ENCODE measurements at regions of chrX and their contacts with region 1.

Region 1: DNA sequence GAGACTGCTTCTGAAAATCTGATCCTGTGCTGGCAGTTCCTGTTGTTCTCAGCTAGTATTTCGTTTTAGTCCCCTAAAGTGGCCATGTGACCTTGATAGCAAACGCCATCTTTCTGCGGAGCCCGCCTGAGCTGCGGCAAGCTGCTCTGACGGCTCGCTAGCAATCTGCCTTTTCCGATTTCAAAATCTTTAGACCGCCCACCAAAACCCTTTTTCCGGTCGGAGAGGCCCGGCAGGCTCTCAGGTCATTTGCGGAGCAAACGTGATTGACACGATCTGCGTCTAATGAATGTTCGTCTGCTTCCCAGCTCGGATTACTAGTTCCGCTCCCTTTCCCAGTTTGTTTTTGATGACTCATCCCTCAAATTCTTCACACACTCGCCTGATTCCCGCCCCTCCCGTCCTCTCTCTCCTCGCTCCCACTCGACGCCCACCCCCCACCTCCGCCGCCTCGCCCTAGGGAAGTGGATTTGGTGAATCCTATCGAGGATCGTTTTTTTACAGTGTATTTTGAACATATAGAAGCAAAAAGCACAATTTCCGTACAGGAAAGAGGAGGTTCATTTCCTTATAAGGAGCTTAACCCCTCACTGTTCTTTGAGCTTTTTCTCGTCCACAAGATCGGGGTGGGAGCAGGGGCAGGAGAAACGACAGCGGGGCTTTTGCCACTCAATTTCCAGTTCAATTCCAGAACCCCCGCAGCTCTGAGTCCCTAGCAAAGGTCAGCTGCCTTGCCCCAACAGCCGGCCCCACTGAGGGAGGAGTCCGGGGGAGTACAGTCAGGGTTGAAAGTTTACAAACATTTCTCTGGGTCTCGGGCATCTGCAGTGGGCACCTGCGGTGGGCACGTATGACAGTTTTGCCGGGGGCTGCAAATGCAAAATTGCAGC is 37.5 kb downstream of the NLGN3 start:
- DNase-seq: peak; percentile 42 to 86 (median 80)
- ATAC-seq: peak; percentile 95
- H3K4me3 ChIP-seq: peak overlapping the region; percentile 85
- H3K4me3 Mint-ChIP-seq: peak overlapping the region; percentile 83 to 98 (median 96)
- H3K27ac ChIP-seq: peak overlapping the region; percentile 94
- H3K27ac Mint-ChIP-seq: peak overlapping the region; percentile 95 to 100 (median 98)
- H3K4me1 ChIP-seq: peaks cover 0 to 10% of the 10 kb centered on the region in 2 donors
- H3K4me1 Mint-ChIP-seq: peaks cover 0 to 28% (median 21%) of the 10 kb centered on the region in 7 donors
- H3K27me3 ChIP-seq: no peaks in the 10 kb centered on the region
- H3K27me3 Mint-ChIP-seq: no peaks in the 10 kb centered on the region

Region 2: GRCh38 chrX:70133303-70134115 is 1048.6 kb before region 1 on chrX and contains the start of gene IGBP1:
- CTCF ChIA-PET with region 1: no interaction called
- POLR2A ChIA-PET with region 1: no interaction called
- intact Hi-C with region 1: loop called in 1 of 2 experiments (anchors 5 kb)
- DNase-seq: peak; percentile 40 to 90 (median 82)
- ATAC-seq: peak; percentile 90
- H3K4me3 ChIP-seq: peak within 1 kb of the TSS; percentile 94
- H3K4me3 Mint-ChIP-seq: peak within 1 kb of the TSS; percentile 95 to 99 (median 99)
- H3K27ac ChIP-seq: peak within 1 kb of the TSS; percentile 82
- H3K27ac Mint-ChIP-seq: peak within 1 kb of the TSS; percentile 91 to 99 (median 97)
- H3K4me1 ChIP-seq: peaks cover 16 to 18% of the 10 kb centered on the region in 2 donors
- H3K4me1 Mint-ChIP-seq: peaks cover 14 to 47% (median 29%) of the 10 kb centered on the region in 7 donors
- H3K27me3 ChIP-seq: no peaks in the 10 kb centered on the region
- H3K27me3 Mint-ChIP-seq: no peaks in the 10 kb centered on the region
- total RNA-seq, gene IGBP1: 46.7 to 70.1 (median 58.9) TPM

Region 3: GRCh38 chrX:70970482-70970995 is 211.6 kb before region 1 on chrX:
- CTCF ChIA-PET with region 1: interaction called, 9 read pairs
- POLR2A ChIA-PET with region 1: no interaction called
- intact Hi-C with region 1: loop called (anchors 1 to 2 kb)
- DNase-seq: peak in 5 of 9 donors; percentile 1 to 26 (median 6)
- ATAC-seq: no peak
- H3K4me3 ChIP-seq: no peak overlapping the region
- H3K4me3 Mint-ChIP-seq: peak overlapping the region in 7 of 10 donors; percentile 2 to 57 (median 25)
- H3K27ac ChIP-seq: no peak overlapping the region
- H3K27ac Mint-ChIP-seq: no peak overlapping the region
- H3K4me1 ChIP-seq: no peaks in the 10 kb centered on the region
- H3K4me1 Mint-ChIP-seq: peaks cover 0 to 8% (median 3%) of the 10 kb centered on the region in 7 donors
- H3K27me3 ChIP-seq: no peaks in the 10 kb centered on the region
- H3K27me3 Mint-ChIP-seq: peaks cover 0 to 3% (median 0%) of the 10 kb centered on the region in 5 donors

Region 4: GRCh38 chrX:71032516-71032915 is 149.6 kb before region 1 on chrX:
- CTCF ChIA-PET with region 1: no interaction called
- POLR2A ChIA-PET with region 1: no interaction called
- intact Hi-C with region 1: no loop called
- DNase-seq: no peak
- ATAC-seq: no peak
- H3K4me3 ChIP-seq: no peak overlapping the region
- H3K4me3 Mint-ChIP-seq: no peak overlapping the region
- H3K27ac ChIP-seq: no peak overlapping the region
- H3K27ac Mint-ChIP-seq: no peak overlapping the region
- H3K4me1 ChIP-seq: no peaks in the 10 kb centered on the region
- H3K4me1 Mint-ChIP-seq: peaks cover 0 to 3% (median 0%) of the 10 kb centered on the region in 7 donors
- H3K27me3 ChIP-seq: no peaks in the 10 kb centered on the region
- H3K27me3 Mint-ChIP-seq: no peaks in the 10 kb centered on the region

Region 5: DNA sequence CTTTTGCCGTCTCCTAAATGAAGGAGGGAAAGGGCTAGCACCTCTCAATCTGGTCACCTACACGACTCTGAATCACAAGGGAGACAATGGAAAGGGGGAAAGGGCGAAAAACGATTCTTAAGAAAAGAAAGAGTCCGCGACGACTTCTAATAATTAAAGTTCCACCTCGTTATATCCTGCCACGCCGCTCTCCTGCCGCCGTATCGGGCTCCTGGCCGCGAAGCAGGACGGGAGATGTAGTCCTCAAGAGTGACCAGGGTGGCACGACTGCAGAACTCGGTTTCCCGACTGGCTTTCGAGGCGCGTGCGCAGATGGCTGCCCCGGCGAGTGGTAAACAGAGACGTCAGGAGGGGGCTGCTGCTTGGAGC is 86.6 kb before region 1 on chrX and contains the start of gene FOXO4:
- CTCF ChIA-PET with region 1: interaction called, 18 read pairs
- POLR2A ChIA-PET with region 1: interaction called, 9 read pairs
- intact Hi-C with region 1: loop called (anchors 1 to 2 kb)
- DNase-seq: peak; percentile 69 to 91 (median 82)
- ATAC-seq: peak; percentile 92
- H3K4me3 ChIP-seq: peak within 1 kb of the TSS; percentile 70
- H3K4me3 Mint-ChIP-seq: peak within 1 kb of the TSS; percentile 90 to 100 (median 96)
- H3K27ac ChIP-seq: peak within 1 kb of the TSS; percentile 85
- H3K27ac Mint-ChIP-seq: peak within 1 kb of the TSS; percentile 91 to 97 (median 95)
- H3K4me1 ChIP-seq: peaks cover 20 to 21% of the 10 kb centered on the region in 2 donors
- H3K4me1 Mint-ChIP-seq: peaks cover 11 to 40% (median 32%) of the 10 kb centered on the region in 7 donors
- H3K27me3 ChIP-seq: no peaks in the 10 kb centered on the region
- H3K27me3 Mint-ChIP-seq: peaks cover 0 to 6% (median 0%) of the 10 kb centered on the region in 5 donors
- total RNA-seq, gene FOXO4: 11.9 to 40.6 (median 30.0) TPM

Region 6: DNA sequence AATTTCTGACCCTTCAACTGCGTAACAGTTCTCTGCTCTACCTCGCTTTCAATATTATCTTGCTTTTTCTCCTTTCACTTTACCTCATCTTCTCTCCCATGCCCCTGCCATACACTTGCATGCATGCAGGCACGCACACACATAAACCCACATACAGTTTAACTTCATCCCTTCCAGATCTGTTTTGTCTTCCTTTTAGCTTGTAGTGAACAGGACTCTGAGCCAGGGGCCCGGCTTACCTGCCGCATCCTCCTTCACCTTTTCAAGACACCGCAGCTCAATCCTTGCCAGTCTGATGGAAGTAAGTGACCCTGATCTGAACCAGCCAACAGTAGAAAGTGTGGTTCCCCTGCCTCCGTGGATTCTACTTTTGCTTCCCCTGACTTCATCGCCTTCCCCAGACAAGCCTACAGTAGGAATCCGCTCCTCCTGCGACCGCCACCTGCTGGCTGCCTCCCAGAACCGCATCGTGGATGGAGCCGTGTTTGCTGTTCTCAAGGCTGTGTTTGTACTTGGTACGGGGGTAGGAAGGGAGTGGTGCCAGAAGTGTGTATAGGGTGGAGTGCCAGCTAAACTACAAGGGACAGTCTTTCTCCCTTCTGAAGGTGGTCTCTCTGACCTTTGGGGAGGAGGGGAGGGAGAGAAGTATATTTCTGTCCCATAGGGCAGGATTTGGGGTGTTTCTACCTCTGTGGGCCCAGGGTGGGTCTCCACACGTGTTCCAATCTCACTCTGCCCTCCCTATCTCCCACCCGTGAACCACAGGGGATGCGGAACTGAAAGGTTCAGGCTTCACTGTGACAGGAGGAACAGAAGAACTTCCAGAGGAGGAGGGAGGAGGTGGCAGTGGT is 53.0 kb before region 1 on chrX:
- CTCF ChIA-PET with region 1: no interaction called
- POLR2A ChIA-PET with region 1: interaction called, 3 read pairs
- intact Hi-C with region 1: loop called in 1 of 2 experiments (anchors 1 kb)
- DNase-seq: peak; percentile 52 to 81 (median 71)
- ATAC-seq: peak; percentile 95
- H3K4me3 ChIP-seq: no peak overlapping the region
- H3K4me3 Mint-ChIP-seq: peak overlapping the region; percentile 5 to 76 (median 51)
- H3K27ac ChIP-seq: peak overlapping the region; percentile 48
- H3K27ac Mint-ChIP-seq: peak overlapping the region; percentile 53 to 88 (median 78)
- H3K4me1 ChIP-seq: peaks cover 0 to 14% of the 10 kb centered on the region in 2 donors
- H3K4me1 Mint-ChIP-seq: peaks cover 12 to 28% (median 15%) of the 10 kb centered on the region in 7 donors
- H3K27me3 ChIP-seq: no peaks in the 10 kb centered on the region
- H3K27me3 Mint-ChIP-seq: no peaks in the 10 kb centered on the region

Region 7: GRCh38 chrX:71254092-71254941 is 72.2 kb after region 1 on chrX and contains the start of gene ZMYM3:
- CTCF ChIA-PET with region 1: interaction called, 3 read pairs
- POLR2A ChIA-PET with region 1: interaction called, 25 read pairs
- intact Hi-C with region 1: loop called (anchors 1 kb)
- DNase-seq: peak; percentile 46 to 87 (median 78)
- ATAC-seq: peak; percentile 89
- H3K4me3 ChIP-seq: peak within 1 kb of the TSS; percentile 79
- H3K4me3 Mint-ChIP-seq: peak within 1 kb of the TSS; percentile 76 to 97 (median 90)
- H3K27ac ChIP-seq: peak within 1 kb of the TSS; percentile 91
- H3K27ac Mint-ChIP-seq: peak within 1 kb of the TSS; percentile 87 to 96 (median 91)
- H3K4me1 ChIP-seq: peaks cover 0 to 20% of the 10 kb centered on the region in 2 donors
- H3K4me1 Mint-ChIP-seq: peaks cover 0 to 30% (median 18%) of the 10 kb centered on the region in 7 donors
- H3K27me3 ChIP-seq: no peaks in the 10 kb centered on the region
- H3K27me3 Mint-ChIP-seq: no peaks in the 10 kb centered on the region
- total RNA-seq, gene ZMYM3: 21.2 to 34.1 (median 21.6) TPM

Region 8: GRCh38 chrX:71514367-71515038 is 332.3 kb after region 1 on chrX:
- CTCF ChIA-PET with region 1: no interaction called
- POLR2A ChIA-PET with region 1: no interaction called
- intact Hi-C with region 1: no loop called
- DNase-seq: peak in 7 of 9 donors; percentile 28 to 57 (median 36)
- ATAC-seq: peak; percentile 91
- H3K4me3 ChIP-seq: no peak overlapping the region
- H3K4me3 Mint-ChIP-seq: peak overlapping the region in 2 of 10 donors; percentile 24 to 26
- H3K27ac ChIP-seq: no peak overlapping the region
- H3K27ac Mint-ChIP-seq: peak overlapping the region in 6 of 9 donors; percentile 17 to 76 (median 34)
- H3K4me1 ChIP-seq: peaks cover 3 to 6% of the 10 kb centered on the region in 2 donors
- H3K4me1 Mint-ChIP-seq: peaks cover 5 to 18% (median 10%) of the 10 kb centered on the region in 7 donors
- H3K27me3 ChIP-seq: no peaks in the 10 kb centered on the region
- H3K27me3 Mint-ChIP-seq: peaks cover 0 to 2% (median 0%) of the 10 kb centered on the region in 5 donors

Region 9: DNA sequence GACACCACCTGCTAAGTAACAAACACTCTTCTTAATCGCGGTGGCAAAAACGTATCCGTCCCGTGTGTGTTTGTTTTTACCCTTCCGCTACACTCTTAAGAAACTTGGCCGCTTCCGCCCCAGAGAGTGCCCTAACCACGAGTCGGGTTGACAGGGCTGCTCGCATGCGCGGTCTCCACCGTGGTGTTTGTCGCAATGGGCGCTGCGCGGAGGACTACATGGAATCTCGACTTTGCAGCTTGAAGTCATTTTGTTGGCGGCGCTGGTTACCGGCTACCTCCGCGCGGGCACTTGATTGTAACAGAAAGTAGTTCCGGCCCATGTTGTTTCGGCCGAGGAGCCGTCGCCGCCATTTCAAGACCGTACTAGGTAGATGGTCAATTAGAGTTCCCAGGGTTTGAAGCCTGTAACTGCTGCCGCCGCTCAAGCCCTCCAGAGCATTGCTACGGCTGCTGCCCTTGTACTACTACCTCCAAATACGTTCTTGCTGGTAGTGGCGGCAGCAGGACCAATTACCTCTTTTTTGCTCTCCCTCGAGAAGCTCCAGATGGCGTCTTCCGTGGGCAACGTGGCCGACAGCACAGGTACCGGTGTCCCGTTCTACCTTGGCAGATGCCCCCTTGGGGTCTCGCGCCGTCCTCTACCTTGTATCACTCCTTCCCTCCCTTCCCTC is 350.7 kb after region 1 on chrX and contains the start of gene OGT:
- CTCF ChIA-PET with region 1: no interaction called
- POLR2A ChIA-PET with region 1: interaction called, 4 read pairs
- intact Hi-C with region 1: loop called (anchors 5 kb)
- DNase-seq: peak; percentile 77 to 95 (median 92)
- ATAC-seq: peak; percentile 91
- H3K4me3 ChIP-seq: peak within 1 kb of the TSS; percentile 96
- H3K4me3 Mint-ChIP-seq: peak within 1 kb of the TSS; percentile 76 to 100 (median 98)
- H3K27ac ChIP-seq: peak within 1 kb of the TSS; percentile 91
- H3K27ac Mint-ChIP-seq: peak within 1 kb of the TSS; percentile 92 to 99 (median 99)
- H3K4me1 ChIP-seq: peaks cover 12 to 16% of the 10 kb centered on the region in 2 donors
- H3K4me1 Mint-ChIP-seq: peaks cover 4 to 35% (median 31%) of the 10 kb centered on the region in 7 donors
- H3K27me3 ChIP-seq: no peaks in the 10 kb centered on the region
- H3K27me3 Mint-ChIP-seq: no peaks in the 10 kb centered on the region
- total RNA-seq, gene OGT: 313 to 520 (median 424) TPM